ENCODE measurements at regions of chr9 and their contacts with region 1.

Region 1: DNA sequence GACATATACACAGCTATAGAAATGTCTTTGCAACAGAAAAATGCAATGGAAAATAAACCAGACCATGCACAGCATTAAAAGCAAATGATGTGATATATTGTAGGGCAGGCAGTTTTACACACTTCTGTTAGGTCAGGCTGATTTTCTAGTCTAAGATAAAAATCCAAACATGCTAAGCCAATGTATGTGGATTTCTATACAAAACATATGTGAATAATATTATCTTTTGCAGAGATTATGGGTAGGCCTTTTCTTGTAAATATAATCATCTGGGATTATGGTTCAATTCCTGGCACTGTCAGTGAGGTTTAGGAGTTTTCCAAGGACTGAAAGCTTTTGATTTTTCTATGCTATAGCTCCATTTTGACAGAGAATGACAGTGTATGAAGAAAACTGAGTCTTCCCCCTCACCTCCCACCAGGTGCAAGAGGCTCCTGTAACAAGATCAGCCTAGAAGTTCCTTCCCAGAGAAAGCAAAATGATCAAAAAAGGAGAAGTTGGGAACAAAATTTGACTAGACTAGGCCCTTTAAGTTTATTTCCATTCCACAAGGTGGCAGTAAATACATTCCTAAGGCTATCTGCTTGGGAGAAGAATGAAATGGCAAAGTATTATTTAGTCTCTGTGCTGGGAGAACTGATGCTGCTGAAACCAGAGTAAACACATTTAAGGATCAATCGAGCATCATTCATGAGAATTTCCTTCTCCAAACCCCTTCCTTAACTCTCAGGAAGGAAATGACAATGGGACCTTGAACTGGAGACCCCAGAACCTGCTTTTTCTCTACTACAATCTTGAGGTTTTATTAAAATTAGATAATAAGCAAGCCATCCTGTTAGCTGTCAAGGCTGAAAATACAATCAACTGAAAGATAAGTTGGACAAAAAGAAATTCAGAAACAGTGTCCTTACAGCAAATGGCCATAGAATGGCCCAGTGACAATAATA is 133.0 kb upstream of the TUT7 start:
- DNase-seq: peak; percentile 64
- H3K4me3 Mint-ChIP-seq: no peak overlapping the region
- H3K27ac Mint-ChIP-seq: no peak overlapping the region
- H3K4me1 Mint-ChIP-seq: peaks cover 6% of the 10 kb centered on the region
- H3K27me3 Mint-ChIP-seq: no peaks in the 10 kb centered on the region
- CTCF ChIP-seq: peak; percentile 76

Region 2: DNA sequence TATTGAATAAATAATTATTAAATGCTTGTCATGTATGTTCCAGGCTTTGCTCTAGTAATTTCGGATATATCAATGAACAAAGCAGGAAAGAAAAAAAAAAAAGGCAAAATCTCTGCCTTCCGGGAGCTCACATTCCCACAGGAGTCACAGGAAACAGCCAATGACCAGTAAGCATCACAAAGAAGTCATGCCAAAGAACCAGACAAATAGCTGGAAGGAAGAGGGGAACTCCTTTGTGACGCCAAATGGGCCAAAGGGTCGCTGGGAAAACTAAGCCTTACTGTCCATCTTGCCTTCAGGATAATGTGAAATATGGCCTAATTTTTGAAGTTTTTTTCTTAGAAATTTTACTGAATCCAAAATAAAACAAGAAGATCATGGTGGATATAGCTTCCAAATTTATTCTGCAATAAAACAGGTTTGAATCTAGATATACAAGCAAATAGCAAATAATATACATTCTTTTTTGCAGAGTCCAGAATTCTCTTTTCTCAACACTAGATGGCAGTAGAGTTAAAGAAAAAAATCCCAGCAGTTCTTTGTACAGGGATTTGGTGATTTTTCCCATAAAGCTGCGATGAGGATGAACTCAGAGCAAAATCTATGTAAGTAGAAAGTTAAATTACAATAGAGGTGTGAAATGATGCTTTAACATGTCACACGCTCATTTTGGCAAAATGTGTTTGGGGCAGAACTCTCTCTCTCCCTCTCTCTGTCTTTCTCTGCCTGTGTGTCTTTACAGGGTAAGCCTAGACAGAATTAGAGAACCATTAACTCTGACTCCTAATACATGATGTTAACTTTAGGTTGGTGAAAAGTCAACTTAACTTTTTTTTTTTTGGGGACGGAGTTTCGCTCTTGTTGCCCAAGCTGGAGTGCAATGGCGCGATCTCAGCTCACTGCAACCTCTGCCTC is 72.9 kb before region 1 on chr9:
- CTCF ChIA-PET with region 1: interaction called, 11 read pairs
- POLR2A ChIA-PET with region 1: interaction called, 4 read pairs
- intact Hi-C with region 1: loop called (anchors 1 kb)
- DNase-seq: peak; percentile 45
- H3K4me3 Mint-ChIP-seq: no peak overlapping the region
- H3K27ac Mint-ChIP-seq: no peak overlapping the region
- H3K4me1 Mint-ChIP-seq: no peaks in the 10 kb centered on the region
- H3K27me3 Mint-ChIP-seq: no peaks in the 10 kb centered on the region
- CTCF ChIP-seq: peak; percentile 44

Region 3: DNA sequence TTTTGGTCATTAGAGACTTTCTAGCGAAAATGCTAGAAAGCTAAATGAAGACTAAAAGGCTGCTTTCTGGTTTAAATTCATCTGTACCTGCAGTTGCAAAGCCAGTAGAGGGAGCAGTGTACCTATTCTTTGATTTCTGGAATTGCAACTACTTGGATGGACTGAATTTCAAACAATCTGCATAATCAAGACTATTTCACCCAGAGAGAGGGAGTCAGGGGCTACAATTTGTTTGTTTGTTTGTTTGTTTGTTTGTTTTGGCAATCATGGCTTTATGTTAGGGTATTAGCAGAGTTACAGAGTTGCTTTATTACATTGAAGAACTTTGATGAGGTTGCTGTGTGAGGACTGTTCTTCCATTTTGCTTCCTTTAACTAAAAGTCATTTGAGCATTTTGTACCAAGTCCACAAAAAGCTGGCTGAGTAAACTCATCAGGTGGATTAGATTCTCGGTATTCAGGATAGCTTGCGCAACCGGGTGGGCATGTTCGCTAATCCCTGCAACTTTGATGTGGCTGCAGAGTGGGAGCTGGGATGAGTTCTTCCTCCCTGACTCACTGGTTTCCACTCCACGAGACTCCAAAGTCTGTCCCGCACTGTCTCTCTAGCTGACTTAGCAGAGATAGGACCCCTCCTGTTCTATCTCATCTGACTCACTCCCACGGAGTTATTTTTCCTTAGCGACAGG is 53.0 kb before region 1 on chr9:
- CTCF ChIA-PET with region 1: interaction called, 33 read pairs
- POLR2A ChIA-PET with region 1: interaction called, 4 read pairs
- intact Hi-C with region 1: loop called (anchors 1 kb)
- DNase-seq: peak; percentile 56
- H3K4me3 Mint-ChIP-seq: no peak overlapping the region
- H3K27ac Mint-ChIP-seq: no peak overlapping the region
- H3K4me1 Mint-ChIP-seq: peaks cover 13% of the 10 kb centered on the region
- H3K27me3 Mint-ChIP-seq: no peaks in the 10 kb centered on the region
- CTCF ChIP-seq: peak; percentile 73

Region 4: GRCh38 chr9:86637515-86637914 is 150.4 kb after region 1 on chr9:
- CTCF ChIA-PET with region 1: interaction called, 8 read pairs
- POLR2A ChIA-PET with region 1: interaction called, 4 read pairs
- intact Hi-C with region 1: loop called (anchors 5 kb)
- DNase-seq: peak; percentile 26
- H3K4me3 Mint-ChIP-seq: no peak overlapping the region
- H3K27ac Mint-ChIP-seq: no peak overlapping the region
- H3K4me1 Mint-ChIP-seq: no peaks in the 10 kb centered on the region
- H3K27me3 Mint-ChIP-seq: no peaks in the 10 kb centered on the region
- CTCF ChIP-seq: peak; percentile 77

Region 5: DNA sequence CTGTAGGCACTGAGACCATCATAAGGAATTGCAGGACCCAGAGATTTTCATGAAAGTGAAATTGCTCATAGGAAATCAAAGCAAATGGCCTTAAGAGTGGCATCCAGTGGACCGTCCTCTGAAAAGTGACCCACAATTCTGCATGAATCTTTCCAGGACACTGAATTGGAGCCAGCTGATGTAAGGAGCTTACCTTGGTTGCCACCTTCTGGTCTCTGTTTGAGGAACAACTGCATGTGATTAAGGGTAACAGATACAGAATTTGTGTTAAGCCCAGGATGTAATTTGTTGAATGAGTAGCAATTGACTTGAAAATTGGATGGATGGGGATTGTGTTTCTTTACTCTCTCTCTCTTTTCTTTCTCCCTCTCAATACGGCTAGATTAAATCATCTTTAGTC is 510.0 kb after region 1 on chr9:
- CTCF ChIA-PET with region 1: interaction called, 7 read pairs
- POLR2A ChIA-PET with region 1: no interaction called
- intact Hi-C with region 1: loop called (anchors 1 kb)
- DNase-seq: peak; percentile 52
- H3K4me3 Mint-ChIP-seq: no peak overlapping the region
- H3K27ac Mint-ChIP-seq: no peak overlapping the region
- H3K4me1 Mint-ChIP-seq: peaks cover 10% of the 10 kb centered on the region
- H3K27me3 Mint-ChIP-seq: no peaks in the 10 kb centered on the region
- CTCF ChIP-seq: peak; percentile 41

Measured in MCF 10A (cell line).